Testis (tissue), 5 donors: ENCODE measurements at regions of chr11 and their contacts with region 1.

Region 1: GRCh38 chr11:115496917-115497702 is 7.1 kb downstream of the CADM1 start:
- DNase-seq: no peak
- H3K4me3 ChIP-seq: no peak overlapping the region
- H3K27ac ChIP-seq: no peak overlapping the region
- H3K4me1 ChIP-seq: peaks cover 10% of the 10 kb centered on the region
- H3K27me3 ChIP-seq: no peaks in the 10 kb centered on the region
- CTCF ChIP-seq: no peak
- POLR2A ChIP-seq: no peak

Region 2: GRCh38 chr11:114832532-114833125 is 664.5 kb before region 1 on chr11:
- intact Hi-C with region 1: no loop called
- DNase-seq: no peak
- H3K4me3 ChIP-seq: no peak overlapping the region
- H3K27ac ChIP-seq: no peak overlapping the region
- H3K4me1 ChIP-seq: no peaks in the 10 kb centered on the region
- H3K27me3 ChIP-seq: no peaks in the 10 kb centered on the region
- CTCF ChIP-seq: no peak
- POLR2A ChIP-seq: no peak

Region 3: DNA sequence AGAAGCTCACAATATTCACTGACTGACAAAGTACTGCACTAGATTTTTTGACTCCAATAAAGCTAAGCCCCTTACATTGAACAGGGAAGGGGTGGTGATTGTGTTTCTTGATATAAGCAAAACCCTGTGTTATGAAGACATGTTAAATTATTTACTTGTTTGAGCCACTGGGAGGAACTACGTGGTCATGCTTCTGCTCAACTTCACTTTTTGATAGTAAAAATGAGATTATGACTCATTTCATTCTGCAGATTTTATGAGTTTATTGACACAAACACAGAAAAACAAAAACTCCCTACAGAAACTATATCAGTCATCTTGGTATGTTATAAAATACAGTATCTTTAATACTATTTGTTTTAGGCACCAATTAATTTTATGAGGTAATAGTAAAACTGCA is 117.6 kb before region 1 on chr11:
- intact Hi-C with region 1: no loop called
- DNase-seq: no peak
- H3K4me3 ChIP-seq: no peak overlapping the region
- H3K27ac ChIP-seq: no peak overlapping the region
- H3K4me1 ChIP-seq: no peaks in the 10 kb centered on the region
- H3K27me3 ChIP-seq: no peaks in the 10 kb centered on the region
- CTCF ChIP-seq: no peak
- POLR2A ChIP-seq: no peak

Region 4: GRCh38 chr11:115590254-115590653 is 93.1 kb after region 1 on chr11:
- intact Hi-C with region 1: no loop called
- DNase-seq: no peak
- H3K4me3 ChIP-seq: no peak overlapping the region
- H3K27ac ChIP-seq: no peak overlapping the region
- H3K4me1 ChIP-seq: no peaks in the 10 kb centered on the region
- H3K27me3 ChIP-seq: no peaks in the 10 kb centered on the region
- CTCF ChIP-seq: no peak
- POLR2A ChIP-seq: no peak

Region 5: GRCh38 chr11:115848611-115849010 is 351.5 kb after region 1 on chr11:
- intact Hi-C with region 1: loop called (anchors 10 kb)
- DNase-seq: no peak
- H3K4me3 ChIP-seq: no peak overlapping the region
- H3K27ac ChIP-seq: no peak overlapping the region
- H3K4me1 ChIP-seq: no peaks in the 10 kb centered on the region
- H3K27me3 ChIP-seq: no peaks in the 10 kb centered on the region
- CTCF ChIP-seq: no peak
- POLR2A ChIP-seq: no peak